A549 (cell line): ENCODE measurements at regions of chr12 and their contacts with region 1.

Region 1: GRCh38 chr12:63420206-63420644 is 248.1 kb downstream of the DPY19L2 start:
- DNase-seq: peak; percentile 49 to 76
- ATAC-seq: peak; percentile 84 to 98
- H3K4me3 ChIP-seq: no peak overlapping the region
- H3K27ac ChIP-seq: no peak overlapping the region
- H3K4me1 ChIP-seq: no peaks in the 10 kb centered on the region
- CTCF ChIP-seq: peak; percentile 74
- EP300 ChIP-seq: no peak
- POLR2A ChIP-seq: no peak
- RAD21 ChIP-seq: peak; percentile 67 to 79

Region 2: GRCh38 chr12:63450816-63451215 is 30.6 kb after region 1 on chr12:
- CTCF ChIA-PET with region 1: interaction called, 6 read pairs
- POLR2A ChIA-PET with region 1: interaction called, 14 read pairs
- DNase-seq: no peak
- ATAC-seq: no peak
- H3K4me3 ChIP-seq: no peak overlapping the region
- H3K27ac ChIP-seq: no peak overlapping the region
- H3K4me1 ChIP-seq: no peaks in the 10 kb centered on the region
- CTCF ChIP-seq: no peak
- EP300 ChIP-seq: no peak
- POLR2A ChIP-seq: no peak
- RAD21 ChIP-seq: no peak

Region 3: GRCh38 chr12:63668028-63668799 is 248.0 kb after region 1 on chr12 and contains the start of gene DPY19L2:
- CTCF ChIA-PET with region 1: no interaction called
- POLR2A ChIA-PET with region 1: no interaction called
- DNase-seq: peak; percentile 40 to 91
- ATAC-seq: peak; percentile 96
- H3K4me3 ChIP-seq: peak within 1 kb of the TSS; percentile 74
- H3K27ac ChIP-seq: peak within 1 kb of the TSS; percentile 76 to 91
- H3K4me1 ChIP-seq: peaks cover 7% of the 10 kb centered on the region; the same call in 1 of the 3 replicates
- CTCF ChIP-seq: no peak
- EP300 ChIP-seq: no peak
- POLR2A ChIP-seq: no peak; the same call in none of the 2 replicates
- RAD21 ChIP-seq: no peak
- polyA plus RNA-seq, gene DPY19L2: 3.5 and 5.8 TPM in 2 replicates

Region 4: DNA sequence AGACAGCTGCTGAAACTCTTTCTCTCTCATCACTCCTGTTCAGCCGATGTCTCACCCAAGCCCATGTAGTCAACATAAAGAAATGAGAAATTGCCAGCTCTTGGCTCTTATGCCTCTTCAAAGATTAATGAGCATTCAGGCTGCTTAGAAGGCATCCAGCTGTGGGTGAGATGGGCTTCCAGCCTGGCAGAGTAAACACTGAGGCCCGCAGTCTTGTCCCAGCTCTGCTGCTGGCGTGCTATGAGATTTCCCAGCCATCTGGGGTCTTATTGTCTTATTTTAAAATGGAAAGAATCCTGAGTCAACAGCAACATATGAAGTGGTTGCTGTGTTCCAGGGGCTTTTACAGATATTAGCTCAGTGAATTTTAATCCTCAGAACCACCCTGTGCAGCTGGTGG is 372.1 kb after region 1 on chr12:
- CTCF ChIA-PET with region 1: interaction called, 10 read pairs
- POLR2A ChIA-PET with region 1: no interaction called
- DNase-seq: no peak
- ATAC-seq: no peak
- H3K4me3 ChIP-seq: no peak overlapping the region
- H3K27ac ChIP-seq: no peak overlapping the region
- H3K4me1 ChIP-seq: no peaks in the 10 kb centered on the region
- CTCF ChIP-seq: no peak
- EP300 ChIP-seq: no peak
- POLR2A ChIP-seq: no peak
- RAD21 ChIP-seq: no peak